ENCODE measurements at regions of chr16 and their contacts with region 1.

Region 1: GRCh38 chr16:19153876-19154275 is 14.2 kb upstream of the SYT17 start:
- DNase-seq: no peak
- H3K4me3 ChIP-seq: no peak overlapping the region
- H3K27ac ChIP-seq: no peak overlapping the region
- H3K4me1 ChIP-seq: no peaks in the 10 kb centered on the region
- H3K27me3 ChIP-seq: no peaks in the 10 kb centered on the region
- CTCF ChIP-seq: no peak
- EP300 ChIP-seq: no peak
- POLR2A ChIP-seq: no peak

Region 2: DNA sequence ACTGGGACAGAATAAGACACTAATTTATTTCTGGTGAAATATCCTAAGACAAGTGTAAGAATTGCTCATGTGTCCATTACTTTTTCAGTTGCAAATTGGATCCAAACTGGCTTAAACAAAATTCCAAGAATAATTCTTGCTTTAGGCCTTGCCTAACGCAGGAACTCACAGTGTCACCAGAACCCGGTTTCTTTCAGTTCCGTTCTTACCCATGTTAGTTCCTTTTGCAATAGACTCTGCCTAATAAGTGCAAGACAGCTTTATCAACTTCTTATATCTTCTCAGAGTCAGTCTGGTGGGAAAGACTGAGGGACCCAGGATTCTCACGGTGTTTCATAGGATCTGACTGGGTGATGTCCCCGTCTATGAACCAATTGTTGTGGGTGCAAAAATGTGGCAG is 343.3 kb after region 1 on chr16:
- intact Hi-C with region 1: loop called (anchors 10 kb)
- DNase-seq: no peak
- H3K4me3 ChIP-seq: no peak overlapping the region
- H3K27ac ChIP-seq: no peak overlapping the region
- H3K4me1 ChIP-seq: no peaks in the 10 kb centered on the region
- H3K27me3 ChIP-seq: no peaks in the 10 kb centered on the region
- CTCF ChIP-seq: no peak
- EP300 ChIP-seq: no peak
- POLR2A ChIP-seq: no peak